ENCODE measurements at regions of chr3 and their contacts with region 1.

Region 1: DNA sequence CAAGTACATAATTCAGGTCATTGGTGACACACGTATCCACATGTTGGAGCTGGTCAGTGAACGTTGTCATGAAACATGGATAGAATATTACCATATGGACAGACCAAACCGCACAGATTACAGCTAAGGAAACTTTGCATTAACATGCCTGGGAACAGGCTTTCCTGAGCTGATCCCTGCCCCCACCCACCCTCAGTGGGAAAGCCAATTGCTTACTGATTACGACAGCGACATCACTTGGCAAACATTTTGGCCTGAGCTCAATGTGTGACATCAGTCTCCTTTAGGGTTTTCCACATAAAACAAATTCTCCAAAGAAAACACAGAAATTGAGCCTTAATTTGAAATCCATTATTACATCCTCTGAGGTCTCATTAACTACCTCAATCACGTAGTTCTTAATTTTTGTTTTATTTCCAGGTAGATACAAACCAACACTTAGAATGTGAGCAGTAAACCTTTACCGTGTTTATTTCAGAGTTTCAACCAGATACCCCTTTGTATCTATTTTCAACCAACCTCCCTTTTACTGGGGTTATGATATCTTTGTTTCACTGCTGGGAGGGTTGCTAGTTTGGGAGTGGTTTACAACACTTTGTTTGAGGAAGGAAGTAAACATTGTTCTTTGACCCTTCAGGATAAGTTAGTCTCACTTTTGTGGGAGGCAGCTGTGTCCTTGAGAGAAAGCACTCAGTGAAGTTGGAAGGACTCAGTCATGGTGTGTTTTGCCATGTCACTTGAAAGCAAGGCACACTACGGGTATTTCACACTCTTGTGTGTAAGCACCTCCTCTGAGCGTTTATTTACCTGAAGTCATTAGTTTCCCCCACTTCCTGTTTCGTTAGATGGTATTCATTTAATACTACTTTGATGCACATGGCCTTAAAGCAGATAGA is 103.1 kb downstream of the CMSS1 start:
- DNase-seq: peak; percentile 66
- H3K4me3 ChIP-seq: no peak overlapping the region
- H3K27ac ChIP-seq: peak overlapping the region; percentile 65
- H3K4me1 ChIP-seq: peaks cover 41% of the 10 kb centered on the region
- H3K27me3 ChIP-seq: no peaks in the 10 kb centered on the region
- CTCF ChIP-seq: no peak
- POLR2A ChIP-seq: no peak

Region 2: GRCh38 chr3:99909714-99910494 is 10.8 kb before region 1 on chr3:
- CTCF ChIA-PET with region 1: interaction called, 12 read pairs
- POLR2A ChIA-PET with region 1: no interaction called
- dilution Hi-C with region 1: no loop called
- intact Hi-C with region 1: no loop called
- DNase-seq: peak; percentile 61
- H3K4me3 ChIP-seq: no peak overlapping the region
- H3K27ac ChIP-seq: peak overlapping the region; percentile 42
- H3K4me1 ChIP-seq: peaks cover 15% of the 10 kb centered on the region
- H3K27me3 ChIP-seq: no peaks in the 10 kb centered on the region
- CTCF ChIP-seq: no peak
- POLR2A ChIP-seq: no peak

Region 3: DNA sequence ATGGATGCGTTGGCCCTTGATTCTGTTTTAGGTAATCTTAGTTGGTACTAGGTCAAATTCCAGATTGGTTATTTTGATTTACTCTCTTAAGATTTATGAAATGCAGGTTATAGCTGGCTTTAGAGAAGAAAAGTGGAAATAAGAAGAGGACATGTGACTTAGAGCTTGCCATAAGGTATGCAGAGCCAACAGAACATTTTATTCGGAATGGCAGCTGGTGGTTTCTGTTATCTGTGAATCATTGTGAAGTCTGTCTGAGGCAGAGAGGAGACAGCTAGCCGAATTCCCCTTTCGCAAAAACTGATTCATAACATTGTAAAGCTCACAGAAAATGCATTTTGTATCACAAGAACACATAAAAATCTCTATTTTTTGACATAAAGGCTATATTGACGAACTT is 111.5 kb after region 1 on chr3:
- CTCF ChIA-PET with region 1: no interaction called
- POLR2A ChIA-PET with region 1: no interaction called
- dilution Hi-C with region 1: no loop called
- intact Hi-C with region 1: no loop called
- DNase-seq: no peak
- H3K4me3 ChIP-seq: no peak overlapping the region
- H3K27ac ChIP-seq: no peak overlapping the region
- H3K4me1 ChIP-seq: peaks cover 3% of the 10 kb centered on the region
- H3K27me3 ChIP-seq: no peaks in the 10 kb centered on the region
- CTCF ChIP-seq: no peak
- POLR2A ChIP-seq: no peak